Ovary (tissue), 10 donors: ENCODE measurements at regions of chr2 and their contacts with region 1.

Region 1: DNA sequence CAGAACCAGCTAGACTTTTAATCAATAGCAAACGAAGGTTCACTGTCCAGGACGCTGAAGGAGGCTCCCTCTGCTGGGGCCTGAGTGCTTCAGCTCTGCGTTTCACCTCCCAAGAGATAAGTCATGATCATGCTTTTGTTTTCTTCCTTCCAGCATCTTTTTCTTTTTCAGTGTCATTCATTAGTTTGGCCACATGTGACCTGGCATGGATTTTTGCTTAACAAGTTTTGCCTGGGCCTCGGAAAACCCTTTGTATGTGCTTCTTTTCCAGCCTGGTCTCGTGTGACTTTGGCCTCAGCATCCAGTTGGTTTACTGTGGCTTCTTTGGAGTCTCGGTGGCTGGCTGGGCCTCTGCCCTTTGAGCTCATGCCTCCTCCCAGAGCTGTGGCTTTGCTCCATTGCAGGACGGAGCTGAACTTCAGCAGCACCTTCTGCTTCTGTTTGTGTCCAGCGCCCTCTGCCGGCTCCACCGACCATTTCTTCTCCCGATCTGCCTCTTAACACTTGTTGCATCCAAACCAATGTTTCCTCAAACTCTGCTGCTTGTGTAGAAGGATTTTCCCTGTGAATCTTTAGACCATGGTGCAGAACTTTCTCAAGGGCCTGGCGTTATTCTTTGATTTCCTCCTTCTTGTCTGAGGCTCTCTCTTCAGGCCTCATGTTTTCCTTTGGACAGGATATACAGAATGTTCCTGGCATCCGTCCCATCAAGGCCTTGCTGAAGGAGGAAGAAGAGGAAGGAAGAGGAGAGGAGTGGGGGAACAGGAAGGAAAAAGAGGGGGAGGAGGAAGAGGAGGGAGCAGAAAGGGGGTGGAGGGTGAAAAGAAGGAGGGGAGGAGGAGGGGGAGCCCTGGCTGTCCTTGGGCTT is 23.6 kb upstream of the HES6 start:
- DNase-seq: peak; percentile 87 to 95 (median 90)
- H3K4me3 ChIP-seq: no peak overlapping the region
- H3K27ac ChIP-seq: peak overlapping the region; percentile 17 to 30
- H3K4me1 ChIP-seq: peaks cover 3% of the 10 kb centered on the region
- H3K27me3 ChIP-seq: no peaks in the 10 kb centered on the region
- CTCF ChIP-seq: peak; percentile 56 to 85 (median 81)
- EP300 ChIP-seq: no peak
- POLR2A ChIP-seq: no peak

Region 2: GRCh38 chr2:237858294-237859081 is 404.9 kb before region 1 on chr2:
- intact Hi-C with region 1: loop called (anchors 2 to 5 kb)
- DNase-seq: peak; percentile 73 to 81 (median 75)
- H3K4me3 ChIP-seq: peak overlapping the region; percentile 85
- H3K27ac ChIP-seq: peak overlapping the region in 1 of 2 donors; percentile 61
- H3K4me1 ChIP-seq: peaks cover 2% of the 10 kb centered on the region
- H3K27me3 ChIP-seq: no peaks in the 10 kb centered on the region
- CTCF ChIP-seq: peak; percentile 60 to 81 (median 80)
- EP300 ChIP-seq: no peak
- POLR2A ChIP-seq: no peak

Region 3: GRCh38 chr2:238106686-238107524 is 156.5 kb before region 1 on chr2:
- intact Hi-C with region 1: no loop called
- DNase-seq: peak in 3 of 5 donors; percentile 13 to 27 (median 16)
- H3K4me3 ChIP-seq: no peak overlapping the region
- H3K27ac ChIP-seq: no peak overlapping the region
- H3K4me1 ChIP-seq: no peaks in the 10 kb centered on the region
- H3K27me3 ChIP-seq: no peaks in the 10 kb centered on the region
- CTCF ChIP-seq: no peak
- EP300 ChIP-seq: no peak
- POLR2A ChIP-seq: no peak